HEK293 (cell line): ENCODE measurements at regions of chr16 and their contacts with region 1.

Region 1: GRCh38 chr16:67816240-67817031 is 9.7 kb downstream of the TSNAXIP1 start:
- H3K4me3 ChIP-seq: no peak overlapping the region
- H3K27ac ChIP-seq: no peak overlapping the region
- H3K4me1 ChIP-seq: no peaks in the 10 kb centered on the region
- CTCF ChIP-seq: peak; percentile 98

Region 2: GRCh38 chr16:67833418-67834241 is 17.2 kb after region 1 on chr16:
- CTCF ChIA-PET with region 1: interaction called, 32 read pairs
- POLR2A ChIA-PET with region 1: interaction called, 7 read pairs
- H3K4me3 ChIP-seq: peak overlapping the region; percentile 60
- H3K27ac ChIP-seq: peak overlapping the region; percentile 76
- H3K4me1 ChIP-seq: no peaks in the 10 kb centered on the region
- CTCF ChIP-seq: no peak; the same call in 1 of the 2 replicates

Region 3: DNA sequence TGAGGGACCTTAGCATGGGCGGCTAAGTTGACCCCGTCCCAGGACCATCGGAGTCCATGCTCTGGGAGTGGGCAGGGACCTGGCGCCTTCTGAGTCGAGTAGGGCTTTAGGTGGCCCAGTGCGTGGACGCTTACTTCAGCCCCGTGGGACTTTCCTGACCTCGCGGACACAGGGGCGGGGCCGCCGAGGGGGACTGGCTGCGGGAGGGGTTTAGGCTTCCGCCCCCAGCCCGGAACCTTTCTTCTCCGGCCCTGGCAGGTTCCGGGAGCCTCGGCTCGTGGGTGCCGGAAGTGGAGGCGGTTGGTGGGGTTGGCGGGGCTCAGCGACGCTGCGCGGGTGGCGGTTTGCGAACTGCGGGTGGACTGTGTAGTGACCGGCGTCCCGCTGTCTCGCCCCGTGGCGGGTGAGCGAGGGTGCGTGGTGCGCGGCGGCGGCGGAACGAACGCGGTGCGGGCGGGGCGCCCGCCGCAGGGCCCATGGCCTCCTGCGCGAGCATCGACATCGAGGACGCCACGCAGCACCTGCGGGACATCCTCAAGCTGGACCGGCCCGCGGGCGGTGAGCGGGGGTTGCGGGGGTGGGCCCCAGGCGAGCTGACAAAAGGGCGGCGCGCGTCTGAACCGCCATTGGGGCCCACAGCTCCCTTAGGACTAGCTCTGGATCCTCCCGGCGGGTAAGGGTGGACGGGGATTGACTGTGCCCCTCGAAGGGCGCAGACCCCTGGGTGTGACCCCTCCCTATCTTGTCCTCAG is 56.5 kb after region 1 on chr16 and contains the start of gene EDC4:
- CTCF ChIA-PET with region 1: interaction called, 13 read pairs
- POLR2A ChIA-PET with region 1: interaction called, 6 read pairs
- H3K4me3 ChIP-seq: peak within 1 kb of the TSS; percentile 79
- H3K27ac ChIP-seq: peak within 1 kb of the TSS; percentile 63; the same call in 1 of the 2 replicates
- H3K4me1 ChIP-seq: no peaks in the 10 kb centered on the region
- CTCF ChIP-seq: peak; percentile 6; the same call in 1 of the 2 replicates

Region 4: GRCh38 chr16:67942200-67942509 is 125.7 kb after region 1 on chr16:
- CTCF ChIA-PET with region 1: interaction called, 14 read pairs
- POLR2A ChIA-PET with region 1: no interaction called
- H3K4me3 ChIP-seq: no peak overlapping the region
- H3K27ac ChIP-seq: no peak overlapping the region
- H3K4me1 ChIP-seq: no peaks in the 10 kb centered on the region
- CTCF ChIP-seq: peak; percentile 70

Region 5: GRCh38 chr16:68179196-68179795 is 362.9 kb after region 1 on chr16:
- CTCF ChIA-PET with region 1: no interaction called
- POLR2A ChIA-PET with region 1: no interaction called
- H3K4me3 ChIP-seq: no peak overlapping the region
- H3K27ac ChIP-seq: no peak overlapping the region
- H3K4me1 ChIP-seq: no peaks in the 10 kb centered on the region
- CTCF ChIP-seq: no peak

Region 6: GRCh38 chr16:68834550-68834949 is 1018.1 kb after region 1 on chr16:
- CTCF ChIA-PET with region 1: no interaction called
- POLR2A ChIA-PET with region 1: no interaction called
- H3K4me3 ChIP-seq: no peak overlapping the region
- H3K27ac ChIP-seq: no peak overlapping the region
- H3K4me1 ChIP-seq: no peaks in the 10 kb centered on the region
- CTCF ChIP-seq: no peak